ENCODE measurements at regions of chr2 and their contacts with region 1.

Region 1: GRCh38 chr2:100752628-100753333 is 67.2 kb upstream of the NPAS2 start:
- DNase-seq: no peak
- H3K4me3 ChIP-seq: no peak overlapping the region
- H3K27ac ChIP-seq: no peak overlapping the region
- H3K4me1 ChIP-seq: peaks cover 0 to 5% (median 0%) of the 10 kb centered on the region in 4 donors
- H3K27me3 ChIP-seq: no peaks in the 10 kb centered on the region
- CTCF ChIP-seq: no peak
- EP300 ChIP-seq: no peak
- POLR2A ChIP-seq: no peak

Region 2: GRCh38 chr2:100819764-100820421 is 67.1 kb after region 1 on chr2 and contains the start of gene NPAS2:
- in situ Hi-C with region 1: no loop called
- intact Hi-C with region 1: loop called (anchors 10 kb)
- DNase-seq: peak; percentile 59
- H3K4me3 ChIP-seq: peak within 1 kb of the TSS; percentile 75 to 89 (median 84)
- H3K27ac ChIP-seq: peak within 1 kb of the TSS; percentile 90 to 94 (median 92)
- H3K4me1 ChIP-seq: peaks cover 0 to 35% (median 16%) of the 10 kb centered on the region in 4 donors
- H3K27me3 ChIP-seq: no peaks in the 10 kb centered on the region
- CTCF ChIP-seq: no peak
- EP300 ChIP-seq: no peak
- POLR2A ChIP-seq: no peak
- total RNA-seq, gene NPAS2: 63.0 to 134 (median 115) TPM